ENCODE measurements at regions of chr19 and their contacts with region 1.

Region 1: GRCh38 chr19:29771708-29772414 is 39.9 kb upstream of the CCNE1 start:
- DNase-seq: peak; percentile 69 to 76
- H3K4me3 ChIP-seq: 0 out of 2 replicates have a peak overlapping the region, but pooled peaks have one; percentile 13
- H3K4me3 Mint-ChIP-seq: no peak overlapping the region
- H3K27ac Mint-ChIP-seq: no peak overlapping the region
- H3K4me1 ChIP-seq: no peaks in the 10 kb centered on the region
- H3K4me1 Mint-ChIP-seq: no peaks in the 10 kb centered on the region
- H3K27me3 ChIP-seq: no peaks in the 10 kb centered on the region
- H3K27me3 Mint-ChIP-seq: no peaks in the 10 kb centered on the region
- CTCF ChIP-seq: peak; percentile 70 to 98

Region 2: DNA sequence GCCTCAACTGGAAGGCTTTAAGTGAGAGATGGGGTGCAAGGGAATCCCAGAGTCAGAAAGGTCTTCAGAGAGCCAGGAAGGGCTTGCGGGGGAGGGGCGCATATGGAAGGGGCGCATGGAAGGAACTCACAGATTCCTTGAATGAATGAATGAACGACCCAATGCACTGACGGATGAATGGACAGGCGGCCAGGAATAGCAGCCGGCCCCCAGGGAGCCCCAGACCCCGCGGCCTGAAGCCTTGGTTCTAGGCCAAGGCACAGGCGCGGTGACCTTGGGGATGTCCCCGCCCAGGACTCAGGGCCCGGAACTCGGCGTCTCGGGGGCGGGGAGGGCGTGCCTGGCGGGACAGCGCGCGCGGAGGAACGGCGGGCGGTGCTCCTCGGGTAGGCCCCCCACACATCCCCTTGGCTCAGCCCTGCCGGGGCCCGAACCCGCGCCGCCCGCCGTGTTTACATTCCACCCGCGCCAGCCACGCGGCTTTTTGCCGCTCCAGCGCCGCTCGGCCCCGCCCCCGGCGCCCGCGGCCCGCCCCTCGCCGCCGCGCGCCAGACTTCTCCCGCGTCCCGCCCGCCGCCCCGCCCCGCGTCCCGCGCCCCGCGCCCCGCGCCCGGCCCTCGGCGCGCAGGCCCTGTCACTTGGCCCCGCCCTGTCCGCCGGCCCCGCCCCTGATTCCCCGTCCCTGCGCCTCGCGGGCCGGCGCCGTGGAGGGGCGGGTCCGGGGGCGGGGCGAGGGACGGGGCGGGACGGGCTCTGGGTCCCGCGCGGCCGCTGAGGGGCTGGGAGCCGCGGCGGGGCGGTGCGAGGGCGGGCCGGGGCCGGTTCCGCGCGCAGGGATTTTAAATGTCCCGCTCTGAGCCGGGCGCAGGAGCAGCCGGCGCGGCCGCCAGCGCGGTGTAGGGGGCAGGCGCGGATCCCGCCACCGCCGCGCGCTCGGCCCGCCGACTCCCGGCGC is 39.5 kb after region 1 on chr19 and contains the start of gene CCNE1:
- CTCF ChIA-PET with region 1: no interaction called
- POLR2A ChIA-PET with region 1: no interaction called
- intact Hi-C with region 1: loop called (anchors 5 kb)
- DNase-seq: peak; percentile 93 to 95
- H3K4me3 ChIP-seq: peak within 1 kb of the TSS; percentile 73
- H3K4me3 Mint-ChIP-seq: peak within 1 kb of the TSS; percentile 75
- H3K27ac Mint-ChIP-seq: peak within 1 kb of the TSS; percentile 83
- H3K4me1 ChIP-seq: peaks cover 5% of the 10 kb centered on the region; the same call in 1 of the 2 replicates
- H3K4me1 Mint-ChIP-seq: peaks cover 5% of the 10 kb centered on the region
- H3K27me3 ChIP-seq: no peaks in the 10 kb centered on the region
- H3K27me3 Mint-ChIP-seq: no peaks in the 10 kb centered on the region
- CTCF ChIP-seq: no peak
- total RNA-seq, gene CCNE1: 29.7 and 33.2 TPM in 2 replicates

Region 3: DNA sequence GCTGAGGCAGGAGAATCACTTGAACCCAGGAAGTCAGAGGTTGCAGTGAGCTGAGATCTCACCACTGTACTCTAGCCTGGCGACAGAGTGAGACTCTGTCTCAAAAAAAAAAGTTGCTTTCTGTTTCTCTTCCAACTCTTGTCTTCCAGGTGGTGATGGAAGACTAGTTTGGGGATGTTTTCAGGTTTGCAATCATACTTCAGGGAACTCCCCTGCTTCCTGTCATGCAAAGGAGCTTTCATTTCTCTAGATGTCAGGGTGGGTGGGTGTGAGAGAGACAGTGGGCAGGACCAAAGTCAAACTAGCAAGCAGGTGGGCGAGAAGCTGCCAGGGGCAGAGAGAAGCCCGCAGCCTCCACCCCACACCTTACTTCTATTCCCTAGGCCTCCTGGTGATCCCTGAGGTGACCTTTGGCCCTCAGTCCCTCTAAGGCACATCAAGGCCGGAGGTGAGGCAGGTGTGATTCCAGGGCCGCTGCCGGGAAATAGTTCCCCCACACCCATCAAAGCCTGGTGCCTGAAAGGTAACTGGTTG is 65.7 kb after region 1 on chr19:
- CTCF ChIA-PET with region 1: no interaction called
- POLR2A ChIA-PET with region 1: no interaction called
- intact Hi-C with region 1: no loop called
- DNase-seq: no peak
- H3K4me3 ChIP-seq: no peak overlapping the region
- H3K4me3 Mint-ChIP-seq: no peak overlapping the region
- H3K27ac Mint-ChIP-seq: no peak overlapping the region
- H3K4me1 ChIP-seq: peaks cover 23% of the 10 kb centered on the region
- H3K4me1 Mint-ChIP-seq: peaks cover 17% of the 10 kb centered on the region
- H3K27me3 ChIP-seq: no peaks in the 10 kb centered on the region
- H3K27me3 Mint-ChIP-seq: peaks cover 3% of the 10 kb centered on the region
- CTCF ChIP-seq: no peak